ENCODE measurements at regions of chr17 and their contacts with region 1.

Region 1: DNA sequence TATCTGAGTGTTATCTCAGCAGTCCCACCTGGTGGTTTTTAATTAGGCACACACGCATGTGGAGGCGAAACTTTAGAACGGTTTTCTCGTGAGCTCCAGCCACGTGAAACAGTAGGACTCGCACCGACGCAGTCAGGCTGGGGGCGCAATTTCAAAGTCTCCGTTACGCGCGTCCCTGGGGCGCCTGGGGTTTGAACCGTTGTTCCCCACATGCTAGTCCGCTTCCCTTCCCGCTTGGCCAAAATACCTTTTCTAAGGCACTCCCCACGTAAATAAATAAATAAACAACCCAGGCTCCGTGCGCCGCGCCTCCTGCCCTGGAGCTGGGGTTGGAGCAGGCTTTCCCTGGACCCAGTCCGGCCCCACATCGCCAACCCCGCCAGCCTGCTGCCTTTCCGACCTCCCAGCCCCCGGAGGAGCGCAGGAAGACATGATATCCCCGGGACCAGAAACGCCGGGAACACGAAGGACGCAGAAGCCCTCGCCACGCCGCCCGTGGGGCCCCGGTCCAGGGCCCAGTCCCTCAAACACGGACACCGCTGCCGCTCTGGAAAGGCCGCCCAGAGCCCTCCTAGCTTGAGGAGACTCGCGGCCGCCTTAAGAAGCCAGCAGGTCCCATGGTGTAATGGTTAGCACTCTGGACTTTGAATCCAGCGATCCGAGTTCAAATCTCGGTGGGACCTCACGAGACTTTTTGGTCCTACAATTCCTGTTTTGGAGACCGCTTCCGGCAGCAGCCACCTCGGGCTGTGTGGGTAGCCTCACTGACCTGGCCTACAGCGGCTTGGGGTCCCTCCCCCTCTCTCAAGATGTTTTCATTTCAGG is 18.2 kb downstream of the GNGT2 start:
- DNase-seq: peak; percentile 93
- H3K4me3 Mint-ChIP-seq: peak overlapping the region; percentile 90
- H3K27ac Mint-ChIP-seq: peak overlapping the region; percentile 100
- H3K4me1 Mint-ChIP-seq: peaks cover 57% of the 10 kb centered on the region
- H3K27me3 Mint-ChIP-seq: no peaks in the 10 kb centered on the region

Region 2: GRCh38 chr17:48954300-48954755 is 237.8 kb before region 1 on chr17:
- CTCF ChIA-PET with region 1: no interaction called
- POLR2A ChIA-PET with region 1: no interaction called
- DNase-seq: no peak
- H3K4me3 Mint-ChIP-seq: no peak overlapping the region
- H3K27ac Mint-ChIP-seq: no peak overlapping the region
- H3K4me1 Mint-ChIP-seq: peaks cover 6% of the 10 kb centered on the region
- H3K27me3 Mint-ChIP-seq: peaks cover 12% of the 10 kb centered on the region

Region 3: GRCh38 chr17:49210158-49211029 is 18.3 kb after region 1 on chr17 and contains the starts of genes ABI3 and GNGT2:
- CTCF ChIA-PET with region 1: interaction called, 18 read pairs
- POLR2A ChIA-PET with region 1: interaction called, 88 read pairs
- DNase-seq: peak; percentile 74
- H3K4me3 Mint-ChIP-seq: peak within 1 kb of the TSS; percentile 90
- H3K27ac Mint-ChIP-seq: peak within 1 kb of the TSS; percentile 86
- H3K4me1 Mint-ChIP-seq: peaks cover 64% of the 10 kb centered on the region
- H3K27me3 Mint-ChIP-seq: no peaks in the 10 kb centered on the region
- total RNA-seq, gene ABI3: 46.3 to 48.2 TPM
- total RNA-seq, gene GNGT2: 22.7 to 23.8 TPM

Region 4: DNA sequence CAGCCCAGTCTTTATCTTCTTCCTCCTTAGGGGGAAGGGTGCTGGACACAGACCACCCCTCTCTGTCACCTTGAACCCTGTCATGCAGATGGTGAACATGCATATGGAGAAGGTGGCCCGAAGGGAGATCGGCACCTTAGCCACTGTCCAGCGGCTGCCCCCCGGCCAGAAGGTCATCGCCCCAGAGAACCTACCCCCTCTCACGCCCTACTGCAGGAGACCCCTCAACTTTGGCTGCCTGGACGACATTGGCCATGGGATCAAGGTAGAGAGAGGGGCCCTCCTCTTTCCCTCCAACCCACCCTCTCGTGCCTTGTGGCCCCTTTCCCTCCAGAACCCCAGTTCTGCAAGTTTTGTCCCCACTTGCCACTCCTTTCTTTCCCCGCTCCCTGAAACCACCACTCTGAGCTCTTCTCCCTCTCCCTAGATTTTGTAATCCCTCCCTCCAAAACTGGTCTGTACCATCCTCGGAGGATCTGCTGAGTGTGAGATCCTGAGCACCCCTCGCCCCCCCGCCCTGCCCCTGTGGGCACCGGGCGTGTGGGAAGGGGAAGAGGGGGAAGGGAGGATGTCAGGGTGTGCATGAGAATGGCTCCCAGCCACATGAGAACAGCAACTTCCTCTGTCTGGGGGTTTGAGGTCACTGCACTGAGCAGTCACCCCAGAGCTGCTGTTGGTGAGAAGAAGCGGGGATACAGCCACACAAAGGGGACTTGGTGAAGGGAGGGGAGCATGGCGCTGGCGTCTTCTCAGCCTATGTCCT is 25.7 kb after region 1 on chr17:
- CTCF ChIA-PET with region 1: interaction called, 7 read pairs
- POLR2A ChIA-PET with region 1: interaction called, 88 read pairs
- DNase-seq: peak; percentile 79
- H3K4me3 Mint-ChIP-seq: peak overlapping the region; percentile 64
- H3K27ac Mint-ChIP-seq: peak overlapping the region; percentile 95
- H3K4me1 Mint-ChIP-seq: peaks cover 71% of the 10 kb centered on the region
- H3K27me3 Mint-ChIP-seq: no peaks in the 10 kb centered on the region

Region 5: GRCh38 chr17:49223517-49224197 is 31.5 kb after region 1 on chr17:
- CTCF ChIA-PET with region 1: interaction called, 37 read pairs
- POLR2A ChIA-PET with region 1: interaction called, 72 read pairs
- DNase-seq: peak; percentile 67
- H3K4me3 Mint-ChIP-seq: peak overlapping the region; percentile 44
- H3K27ac Mint-ChIP-seq: no peak overlapping the region
- H3K4me1 Mint-ChIP-seq: peaks cover 48% of the 10 kb centered on the region
- H3K27me3 Mint-ChIP-seq: peaks cover 26% of the 10 kb centered on the region

Region 6: GRCh38 chr17:49230636-49231562 is 38.8 kb after region 1 on chr17 and contains the start of gene PHOSPHO1:
- CTCF ChIA-PET with region 1: interaction called, 37 read pairs
- POLR2A ChIA-PET with region 1: interaction called, 63 read pairs
- DNase-seq: peak; percentile 88
- H3K4me3 Mint-ChIP-seq: peak within 1 kb of the TSS; percentile 71
- H3K27ac Mint-ChIP-seq: no peak within 1 kb of the TSS
- H3K4me1 Mint-ChIP-seq: peaks cover 13% of the 10 kb centered on the region
- H3K27me3 Mint-ChIP-seq: peaks cover 28% of the 10 kb centered on the region
- total RNA-seq, gene PHOSPHO1: not detected

Measured in activated CD4-positive, alpha-beta memory T cell treated with anti-CD3 and anti-CD28 coated beads, Interleukin-2, amount 10 ng/mL, durations not matched to agents 7 days and 5 days (primary cell).